Activated CD4-positive, alpha-beta memory T cell treated with anti-CD3 and anti-CD28 coated beads for 36 hours (primary cell): ENCODE measurements at regions of chr14 and their contacts with region 1.

Region 1: GRCh38 chr14:54622192-54622958 is 55.4 kb downstream of the SAMD4A start:
- DNase-seq: peak; percentile 89
- H3K4me3 Mint-ChIP-seq: no peak overlapping the region
- H3K27ac Mint-ChIP-seq: no peak overlapping the region
- H3K4me1 Mint-ChIP-seq: peaks cover 37% of the 10 kb centered on the region
- H3K27me3 Mint-ChIP-seq: no peaks in the 10 kb centered on the region

Region 2: GRCh38 chr14:54642801-54643697 is 20.7 kb after region 1 on chr14:
- CTCF ChIA-PET with region 1: no interaction called
- POLR2A ChIA-PET with region 1: interaction called, 3 read pairs
- intact Hi-C with region 1: loop called (anchors 1 kb)
- DNase-seq: no peak
- H3K4me3 Mint-ChIP-seq: no peak overlapping the region
- H3K27ac Mint-ChIP-seq: no peak overlapping the region
- H3K4me1 Mint-ChIP-seq: peaks cover 11% of the 10 kb centered on the region
- H3K27me3 Mint-ChIP-seq: peaks cover 3% of the 10 kb centered on the region